ENCODE measurements at regions of chr19 and their contacts with region 1.

Region 1: DNA sequence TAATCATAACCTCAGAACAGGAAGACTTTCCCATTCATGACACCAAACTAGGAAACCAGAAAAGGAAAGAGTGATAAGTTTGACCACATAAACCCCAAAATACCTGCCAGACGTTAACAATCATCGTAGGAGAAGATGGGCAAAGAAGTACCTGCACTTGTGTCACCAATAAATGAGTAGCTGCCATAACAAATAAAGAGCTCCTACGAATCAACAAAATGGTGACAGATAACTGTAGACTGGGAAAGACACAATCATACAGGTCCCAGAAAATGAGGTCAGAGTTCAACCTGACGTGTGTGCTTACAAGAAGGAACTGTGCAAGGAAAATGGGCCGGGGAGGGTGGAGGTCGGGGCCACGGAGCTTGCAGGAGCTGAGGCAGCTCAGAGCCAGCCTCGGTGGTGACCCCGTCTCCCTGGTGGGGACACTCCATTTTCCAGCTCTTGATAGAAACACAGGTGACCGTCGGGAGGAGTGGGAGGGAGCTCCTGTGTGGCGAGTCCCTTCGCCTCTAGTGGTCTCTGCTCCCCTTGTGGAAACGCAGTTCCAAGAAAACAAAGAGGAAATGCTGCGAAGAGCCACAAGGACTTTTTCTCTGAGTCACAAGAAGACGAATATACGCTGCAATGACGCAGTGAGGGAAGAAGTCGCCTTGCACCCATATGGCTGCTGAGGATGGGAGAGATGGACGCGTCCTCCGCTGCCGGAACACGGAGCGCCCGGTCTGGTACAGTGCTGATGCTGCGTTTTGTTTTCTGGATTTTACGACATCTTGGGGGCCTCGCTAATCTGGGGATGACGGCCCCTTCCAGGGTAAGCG is 9.5 kb downstream of the PIP5K1C start:
- DNase-seq: no peak
- H3K4me3 ChIP-seq: no peak overlapping the region
- H3K27ac ChIP-seq: no peak overlapping the region
- H3K4me1 ChIP-seq: no peaks in the 10 kb centered on the region
- H3K27me3 ChIP-seq: no peaks in the 10 kb centered on the region
- CTCF ChIP-seq: no peak

Region 2: DNA sequence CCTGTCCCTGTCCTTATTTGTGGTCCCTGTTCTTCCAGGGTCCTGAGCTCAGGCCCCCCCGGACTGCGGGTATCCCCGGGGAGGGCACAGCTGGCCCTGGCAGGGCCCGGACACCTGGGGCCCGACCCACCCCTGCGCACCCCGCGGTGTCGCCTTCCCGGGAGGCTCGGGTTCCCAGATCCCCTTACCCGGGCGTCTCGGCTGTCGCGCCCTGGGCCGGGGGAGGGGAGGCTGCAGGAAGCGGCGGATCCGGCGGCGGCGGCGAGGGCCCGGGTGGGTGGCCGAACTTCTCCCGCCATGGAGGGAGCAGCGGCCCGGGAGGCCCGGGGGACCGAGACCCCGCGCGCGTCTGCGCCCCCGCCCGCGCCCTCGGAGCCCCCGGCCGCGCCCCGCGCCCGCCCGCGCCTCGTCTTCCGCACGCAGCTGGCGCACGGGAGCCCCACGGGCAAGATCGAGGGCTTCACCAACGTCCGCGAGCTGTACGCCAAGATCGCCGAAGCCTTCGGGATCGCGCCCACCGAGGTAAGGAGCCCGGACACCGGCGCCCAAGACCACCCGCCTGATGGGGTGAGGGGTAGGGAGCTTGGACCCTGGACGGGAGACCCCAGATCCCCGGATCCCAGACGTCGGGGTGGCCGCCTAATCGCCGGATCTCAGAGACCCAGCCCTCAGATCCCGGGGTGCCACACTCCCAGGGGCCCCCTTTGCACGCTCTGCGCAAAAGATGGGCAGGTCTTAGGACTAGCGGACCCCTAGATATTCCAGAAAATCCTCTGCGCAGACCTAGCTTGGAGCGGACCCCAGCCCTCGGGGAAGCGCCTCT is 105.2 kb before region 1 on chr19 and contains the start of gene GIPC3:
- CTCF ChIA-PET with region 1: no interaction called
- POLR2A ChIA-PET with region 1: no interaction called
- intact Hi-C with region 1: no loop called
- DNase-seq: no peak
- H3K4me3 ChIP-seq: no peak within 1 kb of the TSS
- H3K27ac ChIP-seq: no peak within 1 kb of the TSS
- H3K4me1 ChIP-seq: no peaks in the 10 kb centered on the region
- H3K27me3 ChIP-seq: no peaks in the 10 kb centered on the region; the same call in 1 of the 2 replicates
- CTCF ChIP-seq: no peak
- total RNA-seq, gene GIPC3: 0.13 TPM in 1 of 2 replicates, not detected in the other

Region 3: DNA sequence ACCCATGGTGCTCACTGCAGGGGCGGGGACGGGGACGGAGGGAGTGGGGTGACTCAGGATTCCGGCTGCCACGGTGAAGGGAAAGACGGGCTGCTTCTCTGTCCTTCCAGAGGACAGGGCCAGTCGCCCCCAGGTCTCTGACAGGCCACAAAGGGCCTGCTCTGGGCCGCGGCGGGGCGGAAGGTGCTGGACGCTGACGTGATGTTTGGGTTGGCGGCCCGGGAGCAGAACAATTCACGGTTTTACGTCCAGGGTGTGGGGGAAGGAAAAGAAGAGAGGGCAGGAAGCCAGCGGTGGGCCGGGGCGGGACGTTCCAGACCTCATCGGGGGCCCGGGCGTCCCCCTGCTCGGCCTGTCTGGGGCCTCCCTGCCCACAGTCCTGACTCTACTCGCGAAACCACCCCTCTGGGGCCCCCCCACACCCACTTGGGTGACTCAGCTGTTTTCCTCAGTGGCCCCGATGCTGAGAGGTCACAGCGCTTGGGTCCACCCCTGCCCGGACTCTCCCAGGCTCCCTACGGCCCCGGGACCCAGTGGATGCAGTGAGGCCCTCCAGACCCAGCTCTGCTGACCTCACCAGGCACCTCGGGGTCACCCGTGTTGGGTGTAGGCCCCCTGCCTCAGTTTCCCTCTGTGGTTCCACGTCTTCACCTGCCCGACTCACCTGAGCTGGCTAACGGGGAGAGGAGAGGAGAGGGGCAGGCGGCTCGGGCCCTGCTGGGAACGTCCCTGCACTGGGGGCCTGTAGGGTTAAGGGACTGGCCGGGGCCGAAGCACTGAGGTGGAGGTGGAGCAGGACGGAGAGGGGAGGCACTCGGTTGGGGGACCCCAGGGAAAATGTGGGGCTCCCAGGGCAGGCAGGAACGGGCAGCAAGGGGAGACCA is 19.7 kb before region 1 on chr19:
- CTCF ChIA-PET with region 1: no interaction called
- POLR2A ChIA-PET with region 1: no interaction called
- intact Hi-C with region 1: no loop called
- DNase-seq: no peak
- H3K4me3 ChIP-seq: no peak overlapping the region
- H3K27ac ChIP-seq: no peak overlapping the region
- H3K4me1 ChIP-seq: no peaks in the 10 kb centered on the region
- H3K27me3 ChIP-seq: no peaks in the 10 kb centered on the region
- CTCF ChIP-seq: no peak

Region 4: DNA sequence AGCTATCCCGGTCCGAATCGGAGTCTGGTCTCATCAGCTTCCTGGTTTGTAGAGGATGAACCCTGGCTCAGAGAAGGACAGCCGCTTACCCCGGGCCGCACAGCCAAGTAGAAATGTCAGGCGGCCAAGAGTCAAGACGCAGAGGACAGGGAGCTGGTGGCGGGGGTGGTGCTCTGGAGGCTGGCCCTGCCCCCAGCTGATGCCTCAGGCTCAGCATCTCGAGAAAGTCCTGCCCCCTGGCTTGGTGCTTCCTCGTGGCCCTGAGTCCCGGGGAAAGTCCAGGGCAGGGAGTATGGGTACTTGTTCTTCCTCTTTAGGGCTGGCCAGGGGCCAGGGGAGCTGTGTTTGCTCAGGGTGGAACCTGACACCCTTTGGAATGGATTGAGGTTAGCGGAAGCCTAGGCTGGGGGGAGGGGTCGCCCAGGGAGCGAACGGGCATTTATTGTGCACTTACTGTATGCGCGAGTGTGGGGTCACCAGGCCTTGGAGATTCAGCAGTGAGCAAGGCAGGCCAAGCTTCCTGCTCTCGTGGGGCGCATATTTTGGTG is 19.6 kb after region 1 on chr19:
- CTCF ChIA-PET with region 1: interaction called, 9 read pairs
- POLR2A ChIA-PET with region 1: interaction called, 30 read pairs
- intact Hi-C with region 1: no loop called
- DNase-seq: peak; percentile 91
- H3K4me3 ChIP-seq: no peak overlapping the region
- H3K27ac ChIP-seq: no peak overlapping the region
- H3K4me1 ChIP-seq: peaks cover 31% of the 10 kb centered on the region
- H3K27me3 ChIP-seq: no peaks in the 10 kb centered on the region
- CTCF ChIP-seq: no peak

Measured in PC-9 (cell line).